A549 (cell line): ENCODE measurements at regions of chr10 and their contacts with region 1.

Region 1: GRCh38 chr10:78605800-78606350 is 462.9 kb upstream of the ZMIZ1 start:
- DNase-seq: peak; percentile 21 to 67
- ATAC-seq: peak; percentile 87 to 92
- H3K4me3 ChIP-seq: no peak overlapping the region
- H3K27ac ChIP-seq: no peak overlapping the region
- H3K4me1 ChIP-seq: no peaks in the 10 kb centered on the region
- CTCF ChIP-seq: peak; percentile 34; the same call in 2 of the 3 replicates
- EP300 ChIP-seq: no peak
- POLR2A ChIP-seq: no peak
- RAD21 ChIP-seq: peak in 1 of 2 experiments; percentile 52; a peak in 2 of 5 replicates

Region 2: GRCh38 chr10:78470267-78471103 is 135.4 kb before region 1 on chr10:
- CTCF ChIA-PET with region 1: no interaction called
- POLR2A ChIA-PET with region 1: no interaction called
- DNase-seq: no peak
- ATAC-seq: peak in 1 of 2 experiments; percentile 47; a peak in 3 of 6 replicates
- H3K4me3 ChIP-seq: no peak overlapping the region
- H3K27ac ChIP-seq: no peak overlapping the region
- H3K4me1 ChIP-seq: no peaks in the 10 kb centered on the region
- CTCF ChIP-seq: no peak
- EP300 ChIP-seq: no peak
- POLR2A ChIP-seq: no peak
- RAD21 ChIP-seq: no peak

Region 3: DNA sequence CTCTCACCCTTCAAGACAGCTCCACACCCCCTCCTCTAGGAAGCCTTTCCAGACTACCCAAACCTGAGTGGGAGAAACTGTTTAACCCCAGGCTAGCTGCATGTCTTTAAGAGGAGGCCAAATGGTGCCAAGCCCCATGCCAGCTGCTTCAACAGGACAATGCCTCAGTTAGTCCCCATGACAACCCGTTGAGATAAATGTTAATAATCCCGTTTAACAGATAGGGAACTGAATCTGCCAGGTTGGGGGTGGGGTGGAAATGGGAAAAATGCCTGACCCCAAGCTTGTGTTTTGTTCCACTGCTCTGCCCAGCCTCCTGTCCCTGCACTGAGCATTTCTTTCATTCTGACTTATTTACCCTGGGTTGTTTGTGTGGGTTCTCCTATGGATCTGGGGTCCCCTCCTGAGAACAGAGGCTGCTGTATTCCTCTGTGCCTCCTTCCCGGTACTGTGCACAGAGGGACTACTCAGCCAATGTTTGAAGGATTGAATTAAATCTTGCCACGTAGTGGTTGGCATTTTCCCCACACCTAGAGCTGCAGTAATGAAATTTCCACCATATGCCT is 10.3 kb after region 1 on chr10:
- CTCF ChIA-PET with region 1: interaction called, 14 read pairs
- POLR2A ChIA-PET with region 1: no interaction called
- DNase-seq: no peak
- ATAC-seq: no peak
- H3K4me3 ChIP-seq: no peak overlapping the region
- H3K27ac ChIP-seq: no peak overlapping the region
- H3K4me1 ChIP-seq: no peaks in the 10 kb centered on the region; the same call in 2 of the 3 replicates
- CTCF ChIP-seq: no peak
- EP300 ChIP-seq: no peak
- POLR2A ChIP-seq: no peak
- RAD21 ChIP-seq: no peak